Esophagus muscularis mucosa (tissue), 4 donors: ENCODE measurements at regions of chr2 and their contacts with region 1.

Region 1: GRCh38 chr2:41414486-41415230 is 633.2 kb upstream of the PKDCC start:
- DNase-seq: no peak
- H3K4me3 ChIP-seq: no peak overlapping the region
- H3K27ac ChIP-seq: no peak overlapping the region
- H3K4me1 ChIP-seq: peaks cover 0 to 4% (median under 1%) of the 10 kb centered on the region in 4 donors
- H3K27me3 ChIP-seq: no peaks in the 10 kb centered on the region
- CTCF ChIP-seq: peak; percentile 34 to 54 (median 34)
- EP300 ChIP-seq: no peak
- POLR2A ChIP-seq: no peak

Region 2: GRCh38 chr2:41698678-41699422 is 284.2 kb after region 1 on chr2:
- intact Hi-C with region 1: loop called (anchors 10 kb)
- DNase-seq: no peak
- H3K4me3 ChIP-seq: peak overlapping the region; percentile 5 to 41 (median 26)
- H3K27ac ChIP-seq: no peak overlapping the region
- H3K4me1 ChIP-seq: peaks cover 5 to 20% (median 19%) of the 10 kb centered on the region in 4 donors
- H3K27me3 ChIP-seq: no peaks in the 10 kb centered on the region
- CTCF ChIP-seq: peak; percentile 69 to 85 (median 82)
- EP300 ChIP-seq: no peak
- POLR2A ChIP-seq: no peak